Dendritic cell treated with granulocyte-macrophage colony-stimulating factor and Interleukin-4, amounts not matched to agents 40 ng/mL and 50 ng/mL, for 4 days (primary cell): ENCODE measurements at regions of chr4 and their contacts with region 1.

Region 1: GRCh38 chr4:101103381-101104142 is 243.8 kb downstream of the PPP3CA start:
- H3K4me3 Mint-ChIP-seq: no peak overlapping the region
- H3K27ac Mint-ChIP-seq: peak overlapping the region; percentile 56
- H3K4me1 Mint-ChIP-seq: peaks cover 21% of the 10 kb centered on the region
- H3K27me3 Mint-ChIP-seq: no peaks in the 10 kb centered on the region

Region 2: GRCh38 chr4:101115887-101116286 is 12.3 kb after region 1 on chr4:
- intact Hi-C with region 1: loop called (anchors 2 kb)
- H3K4me3 Mint-ChIP-seq: no peak overlapping the region
- H3K27ac Mint-ChIP-seq: no peak overlapping the region
- H3K4me1 Mint-ChIP-seq: peaks cover 12% of the 10 kb centered on the region
- H3K27me3 Mint-ChIP-seq: no peaks in the 10 kb centered on the region